Activated CD4-positive, alpha-beta T cell treated with anti-CD3 and anti-CD28 coated beads, Interleukin-2, amount 10 ng/mL, durations not matched to agents 24 days and 14 days (primary cell): ENCODE measurements at regions of chr5 and their contacts with region 1.

Region 1: DNA sequence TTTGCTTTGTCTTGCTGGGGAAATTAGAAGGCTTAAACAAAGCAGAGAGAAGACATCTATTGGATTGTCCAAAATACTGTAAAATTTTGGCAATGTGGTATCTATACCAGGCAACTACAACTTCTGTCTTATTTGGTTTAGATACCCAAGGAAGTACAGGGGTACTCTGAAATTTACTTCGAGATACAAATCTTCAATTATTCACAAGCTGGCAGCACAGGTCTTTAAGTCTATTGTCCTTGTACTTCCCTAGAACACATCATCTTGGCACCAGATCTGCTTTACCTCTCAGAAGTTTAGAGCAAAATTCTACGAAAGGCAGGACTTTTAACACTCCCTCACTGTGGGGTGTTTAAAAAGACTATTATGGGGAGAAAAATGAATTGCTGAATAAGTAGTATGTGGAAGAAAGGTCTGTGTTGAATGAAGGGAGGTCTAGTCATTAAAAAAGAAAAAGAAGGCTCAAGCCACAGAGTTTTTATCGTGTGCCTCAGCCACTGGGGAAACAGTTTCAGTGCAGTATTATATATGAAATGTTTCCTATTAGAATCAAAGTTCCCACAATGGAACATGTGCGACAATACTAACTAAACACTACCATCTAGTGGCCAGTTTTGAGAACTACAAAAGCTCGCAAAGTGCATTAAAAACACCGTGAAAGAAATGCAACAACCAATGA is 93.7 kb downstream of the PDE4D start:
- DNase-seq: peak; percentile 80
- H3K4me3 Mint-ChIP-seq: no peak overlapping the region
- H3K27ac Mint-ChIP-seq: no peak overlapping the region
- H3K4me1 Mint-ChIP-seq: no peaks in the 10 kb centered on the region
- H3K27me3 Mint-ChIP-seq: peaks cover 12% of the 10 kb centered on the region

Region 2: DNA sequence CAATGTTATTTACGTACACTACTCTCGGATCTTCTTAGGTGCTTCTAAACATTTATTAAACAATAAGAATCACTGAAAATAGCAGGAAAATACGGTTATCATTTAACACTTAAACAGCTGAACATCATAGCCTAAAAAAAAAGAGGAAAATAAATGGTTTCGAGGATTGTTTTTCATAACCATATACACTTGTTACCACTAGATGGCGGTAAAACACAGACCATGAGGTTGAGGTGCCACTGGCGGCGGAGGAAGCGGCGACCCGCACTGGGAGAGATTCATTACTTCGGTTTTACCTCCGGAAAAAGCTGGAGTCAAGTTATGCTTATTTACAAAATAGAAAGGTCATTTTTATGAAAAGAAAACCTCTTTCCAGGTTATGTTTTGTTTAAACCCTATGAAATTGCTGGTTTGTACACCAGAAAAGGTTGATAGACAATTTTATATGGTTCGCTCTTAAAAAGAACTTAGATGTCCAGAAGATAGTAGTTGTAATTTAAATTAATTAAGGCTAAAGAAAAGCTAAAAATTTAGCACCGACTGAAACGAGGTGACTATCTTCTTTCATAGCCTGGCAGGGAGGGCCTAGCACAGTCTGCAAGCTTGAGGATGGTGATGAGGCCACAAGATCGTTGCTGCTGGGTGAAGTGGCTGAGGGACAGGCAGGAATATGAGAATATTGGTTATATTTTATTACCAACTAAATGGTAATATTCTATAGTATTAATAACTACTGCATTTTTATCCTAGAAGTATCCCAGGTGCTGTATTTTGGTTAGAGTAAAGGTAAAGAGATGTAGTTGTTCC is 611.2 kb before region 1 on chr5:
- intact Hi-C with region 1: loop called (anchors 2 kb)
- DNase-seq: peak; percentile 88
- H3K4me3 Mint-ChIP-seq: peak overlapping the region; percentile 52
- H3K27ac Mint-ChIP-seq: no peak overlapping the region
- H3K4me1 Mint-ChIP-seq: peaks cover 7% of the 10 kb centered on the region
- H3K27me3 Mint-ChIP-seq: peaks cover 45% of the 10 kb centered on the region

Region 3: DNA sequence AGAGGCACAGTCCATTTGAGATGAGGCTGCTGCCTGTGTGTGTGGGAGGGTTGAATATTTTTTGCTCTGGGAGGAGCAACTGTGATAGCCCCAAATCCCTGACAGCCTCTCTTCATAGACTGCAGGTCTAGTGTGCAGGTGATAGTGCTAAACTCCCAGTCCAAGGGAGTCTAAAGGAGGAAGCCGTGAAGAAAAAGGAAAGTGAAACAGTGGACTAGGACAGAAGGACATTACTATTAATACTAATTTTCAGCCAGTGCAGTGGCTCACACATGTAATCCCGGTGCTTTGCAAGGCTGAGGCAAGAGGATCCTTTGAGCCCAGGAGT is 201.3 kb before region 1 on chr5:
- intact Hi-C with region 1: loop called (anchors 10 kb)
- DNase-seq: no peak
- H3K4me3 Mint-ChIP-seq: no peak overlapping the region
- H3K27ac Mint-ChIP-seq: no peak overlapping the region
- H3K4me1 Mint-ChIP-seq: peaks cover 5% of the 10 kb centered on the region
- H3K27me3 Mint-ChIP-seq: peaks cover 7% of the 10 kb centered on the region

Region 4: DNA sequence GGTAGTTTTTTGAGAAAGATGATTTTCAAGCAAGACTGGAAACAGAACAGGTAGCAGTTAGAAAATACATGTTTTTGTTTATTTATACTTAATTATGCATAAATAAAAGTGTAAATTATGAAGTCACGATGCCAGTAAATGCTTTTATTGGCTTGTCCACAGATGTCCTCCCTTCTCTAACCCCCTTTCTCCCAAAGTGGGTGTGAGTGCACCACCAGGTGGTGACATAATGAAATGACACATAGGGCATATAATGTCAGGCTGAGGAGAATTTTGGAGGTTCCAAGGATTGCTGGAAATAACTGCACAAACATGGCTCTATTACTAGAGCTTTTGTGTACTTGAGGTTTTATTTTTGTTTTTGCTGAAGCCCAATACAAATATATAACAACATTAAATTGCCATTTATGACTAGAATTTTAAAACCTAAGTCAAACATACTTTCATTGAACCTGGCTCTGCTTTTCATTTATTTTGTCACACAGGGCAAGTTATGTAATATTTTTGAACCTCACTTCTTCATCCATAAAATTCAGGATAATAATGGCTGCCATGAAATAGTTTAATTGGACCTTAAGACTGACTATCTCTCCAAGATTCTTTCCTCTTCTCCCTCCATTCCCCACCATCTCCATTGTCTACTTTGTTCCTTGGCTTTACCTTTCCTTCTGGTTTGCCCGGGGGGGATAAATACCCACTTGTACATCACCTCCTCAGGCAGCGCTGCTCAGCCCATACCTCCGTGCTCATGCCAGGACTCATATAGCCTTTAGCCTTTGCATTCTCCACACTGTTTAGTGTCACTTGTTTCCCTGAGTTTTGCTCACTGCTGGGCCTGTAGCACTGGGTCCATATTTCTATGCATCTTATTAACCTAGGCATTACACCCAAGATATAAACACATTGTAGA is 75.1 kb before region 1 on chr5:
- intact Hi-C with region 1: loop called (anchors 1 kb)
- DNase-seq: peak; percentile 75
- H3K4me3 Mint-ChIP-seq: no peak overlapping the region
- H3K27ac Mint-ChIP-seq: no peak overlapping the region
- H3K4me1 Mint-ChIP-seq: no peaks in the 10 kb centered on the region
- H3K27me3 Mint-ChIP-seq: peaks cover 11% of the 10 kb centered on the region

Region 5: DNA sequence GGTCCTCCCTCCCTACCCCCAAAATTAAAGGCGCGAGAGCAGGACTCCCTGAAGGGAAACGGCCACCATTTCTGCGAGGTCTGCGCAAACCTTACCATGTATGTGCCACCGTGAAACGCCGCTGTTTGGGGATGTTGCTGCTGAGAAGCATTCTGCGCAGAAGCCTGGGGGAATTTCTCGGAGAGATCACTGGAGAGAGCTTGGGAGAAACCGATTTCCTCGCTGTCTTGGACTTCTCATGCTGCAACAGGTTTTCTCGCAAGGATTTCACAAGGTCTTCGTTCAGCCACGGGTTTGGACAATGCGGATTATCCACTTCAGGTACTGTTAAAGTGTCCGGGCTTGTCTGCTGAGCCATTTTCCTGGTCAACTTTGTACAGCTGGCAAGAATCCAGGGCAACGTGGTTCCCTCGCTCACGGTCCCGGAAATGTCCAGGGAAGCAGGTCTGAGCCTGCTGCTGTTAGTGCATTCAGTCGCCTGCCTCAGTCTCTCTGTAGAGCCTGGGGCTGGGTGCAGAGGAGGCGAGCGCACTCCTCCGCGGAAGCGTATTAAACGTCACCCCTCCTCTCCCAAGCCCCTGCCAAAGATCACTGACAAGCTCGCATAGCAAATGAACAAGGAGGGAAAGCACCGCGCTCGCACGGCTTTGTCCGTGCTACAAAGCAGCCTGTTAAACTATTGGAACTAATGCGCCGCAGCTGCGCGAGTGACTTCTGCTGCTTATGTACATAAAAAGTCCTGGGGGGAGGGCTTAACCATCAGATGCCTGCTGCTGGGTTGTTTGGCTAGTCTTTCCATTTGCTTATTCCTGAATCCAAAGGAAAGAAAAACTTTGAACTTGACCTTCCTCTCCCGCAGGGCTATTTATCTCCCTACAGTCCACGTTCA is 31.4 kb before region 1 on chr5:
- intact Hi-C with region 1: loop called (anchors 2 kb)
- DNase-seq: peak; percentile 73
- H3K4me3 Mint-ChIP-seq: peak overlapping the region; percentile 80
- H3K27ac Mint-ChIP-seq: peak overlapping the region; percentile 75
- H3K4me1 Mint-ChIP-seq: peaks cover 21% of the 10 kb centered on the region
- H3K27me3 Mint-ChIP-seq: peaks cover 42% of the 10 kb centered on the region

Region 6: GRCh38 chr5:59813761-59814562 is 14.2 kb after region 1 on chr5:
- intact Hi-C with region 1: no loop called
- DNase-seq: peak; percentile 74
- H3K4me3 Mint-ChIP-seq: no peak overlapping the region
- H3K27ac Mint-ChIP-seq: no peak overlapping the region
- H3K4me1 Mint-ChIP-seq: peaks cover 2% of the 10 kb centered on the region
- H3K27me3 Mint-ChIP-seq: peaks cover 21% of the 10 kb centered on the region

Region 7: GRCh38 chr5:59863777-59864176 is 64.0 kb after region 1 on chr5:
- intact Hi-C with region 1: no loop called
- DNase-seq: no peak
- H3K4me3 Mint-ChIP-seq: no peak overlapping the region
- H3K27ac Mint-ChIP-seq: no peak overlapping the region
- H3K4me1 Mint-ChIP-seq: no peaks in the 10 kb centered on the region
- H3K27me3 Mint-ChIP-seq: no peaks in the 10 kb centered on the region